Common myeloid progenitor, CD34-positive (primary cell): ENCODE measurements at regions of chr10 and their contacts with region 1.

Region 1: DNA sequence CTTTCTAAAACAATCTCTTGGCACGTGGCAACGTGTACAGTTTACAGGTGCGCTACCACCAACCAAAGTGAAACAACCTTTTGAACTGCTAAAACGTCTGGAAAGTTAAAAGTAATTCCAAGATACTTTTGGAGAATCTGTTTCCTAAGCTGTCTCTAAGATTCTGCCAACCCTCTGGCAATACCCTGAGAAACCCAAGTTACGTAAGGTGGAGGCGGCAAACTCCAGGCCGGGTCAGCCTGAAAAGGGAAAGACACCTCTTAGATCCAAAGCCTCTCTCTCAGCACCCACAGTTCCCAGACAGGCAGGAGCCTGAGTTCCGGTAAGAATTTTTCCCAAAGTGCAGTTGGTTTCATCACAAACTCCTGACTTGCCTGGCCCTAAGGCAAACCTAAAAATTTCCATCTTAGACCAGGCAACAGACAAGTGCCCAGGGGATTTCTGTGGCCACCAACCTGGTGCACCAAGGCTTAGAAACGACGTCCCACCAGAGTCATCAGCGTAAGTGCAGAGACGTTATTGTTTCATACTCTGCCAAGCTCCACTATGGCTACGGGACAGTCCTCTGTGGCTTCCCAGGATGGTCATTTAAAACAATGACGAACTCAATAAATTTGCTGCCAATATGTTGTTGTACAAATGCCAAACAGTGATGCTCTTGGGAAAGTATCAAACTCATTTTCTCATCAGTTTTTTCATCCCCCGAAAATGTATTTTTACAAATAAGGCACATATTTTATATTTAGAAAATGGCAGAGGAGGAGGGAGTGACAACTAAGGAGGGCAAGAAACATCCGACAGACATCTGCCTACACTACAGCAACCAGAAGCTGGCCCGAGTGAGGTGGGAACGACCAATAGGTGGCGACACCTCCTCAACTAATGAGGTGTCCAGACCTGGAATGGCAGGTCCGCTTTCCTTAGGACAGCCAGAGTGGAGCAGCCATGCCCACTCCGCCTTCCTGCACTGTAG is 205.8 kb upstream of the FRMD4A start:
- DNase-seq: peak; percentile 40 to 58 (median 42)
- H3K4me3 ChIP-seq: no peak overlapping the region
- H3K27ac ChIP-seq: no peak overlapping the region
- H3K4me1 ChIP-seq: peaks cover 0 to 13% (median 1%) of the 10 kb centered on the region in 4 experiments
- H3K27me3 ChIP-seq: peaks cover 0 to 31% (median 1%) of the 10 kb centered on the region in 5 experiments

Region 2: GRCh38 chr10:14553448-14553847 is 16.9 kb after region 1 on chr10:
- CTCF ChIA-PET with region 1: interaction called, 21 read pairs
- POLR2A ChIA-PET with region 1: interaction called, 3 read pairs
- DNase-seq: peak in 2 of 3 donors; percentile 21 to 46
- H3K4me3 ChIP-seq: no peak overlapping the region
- H3K27ac ChIP-seq: no peak overlapping the region
- H3K4me1 ChIP-seq: peaks cover 18 to 58% (median 24%) of the 10 kb centered on the region in 4 experiments
- H3K27me3 ChIP-seq: peaks cover 0 to 22% (median 0%) of the 10 kb centered on the region in 5 experiments

Region 3: GRCh38 chr10:14822879-14823755 is 286.6 kb after region 1 on chr10:
- CTCF ChIA-PET with region 1: interaction called, 14 read pairs
- POLR2A ChIA-PET with region 1: no interaction called
- DNase-seq: peak; percentile 29 to 65 (median 59)
- H3K4me3 ChIP-seq: no peak overlapping the region
- H3K27ac ChIP-seq: no peak overlapping the region
- H3K4me1 ChIP-seq: peaks cover 0 to 12% (median 0%) of the 10 kb centered on the region in 4 experiments
- H3K27me3 ChIP-seq: no peaks in the 10 kb centered on the region

Region 4: GRCh38 chr10:14837757-14838581 is 301.4 kb after region 1 on chr10 and contains the starts of genes CDNF, HSPA14 and MSANTD7:
- CTCF ChIA-PET with region 1: interaction called, 17 read pairs
- POLR2A ChIA-PET with region 1: no interaction called
- DNase-seq: peak; percentile 99 to 100 (median 99)
- H3K4me3 ChIP-seq: peak within 1 kb of the TSS; percentile 83 to 98 (median 95)
- H3K27ac ChIP-seq: peak within 1 kb of the TSS; percentile 84 to 93
- H3K4me1 ChIP-seq: peaks cover 9 to 18% (median 16%) of the 10 kb centered on the region in 4 experiments
- H3K27me3 ChIP-seq: no peaks in the 10 kb centered on the region